ENCODE measurements at regions of chr10 and their contacts with region 1.

Region 1: GRCh38 chr10:102132563-102133372 is at the start of gene PPRC1:
- DNase-seq: peak; percentile 99
- ATAC-seq: peak; percentile 95
- H3K4me3 Mint-ChIP-seq: peak within 1 kb of the TSS; percentile 99
- H3K27ac Mint-ChIP-seq: peak within 1 kb of the TSS; percentile 97
- H3K4me1 Mint-ChIP-seq: peaks cover 36% of the 10 kb centered on the region
- H3K27me3 Mint-ChIP-seq: no peaks in the 10 kb centered on the region
- CTCF ChIP-seq: peak; percentile 97
- total RNA-seq, gene PPRC1: 68.6 to 72.2 TPM

Region 2: GRCh38 chr10:102090772-102091171 is 42.0 kb before region 1 on chr10:
- CTCF ChIA-PET with region 1: no interaction called
- POLR2A ChIA-PET with region 1: no interaction called
- intact Hi-C with region 1: no loop called
- DNase-seq: no peak
- ATAC-seq: no peak
- H3K4me3 Mint-ChIP-seq: no peak overlapping the region
- H3K27ac Mint-ChIP-seq: no peak overlapping the region
- H3K4me1 Mint-ChIP-seq: no peaks in the 10 kb centered on the region
- H3K27me3 Mint-ChIP-seq: no peaks in the 10 kb centered on the region
- CTCF ChIP-seq: no peak

Region 3: GRCh38 chr10:102120142-102120990 is 12.4 kb before region 1 on chr10 and contains the start of gene LDB1:
- CTCF ChIA-PET with region 1: interaction called, 40 read pairs
- POLR2A ChIA-PET with region 1: interaction called, 16 read pairs
- intact Hi-C with region 1: no loop called
- DNase-seq: peak; percentile 72
- ATAC-seq: peak; percentile 35
- H3K4me3 Mint-ChIP-seq: peak within 1 kb of the TSS; percentile 84
- H3K27ac Mint-ChIP-seq: peak within 1 kb of the TSS; percentile 100
- H3K4me1 Mint-ChIP-seq: peaks cover 41% of the 10 kb centered on the region
- H3K27me3 Mint-ChIP-seq: no peaks in the 10 kb centered on the region
- CTCF ChIP-seq: no peak
- total RNA-seq, gene LDB1: 68.5 to 70.9 TPM

Region 4: DNA sequence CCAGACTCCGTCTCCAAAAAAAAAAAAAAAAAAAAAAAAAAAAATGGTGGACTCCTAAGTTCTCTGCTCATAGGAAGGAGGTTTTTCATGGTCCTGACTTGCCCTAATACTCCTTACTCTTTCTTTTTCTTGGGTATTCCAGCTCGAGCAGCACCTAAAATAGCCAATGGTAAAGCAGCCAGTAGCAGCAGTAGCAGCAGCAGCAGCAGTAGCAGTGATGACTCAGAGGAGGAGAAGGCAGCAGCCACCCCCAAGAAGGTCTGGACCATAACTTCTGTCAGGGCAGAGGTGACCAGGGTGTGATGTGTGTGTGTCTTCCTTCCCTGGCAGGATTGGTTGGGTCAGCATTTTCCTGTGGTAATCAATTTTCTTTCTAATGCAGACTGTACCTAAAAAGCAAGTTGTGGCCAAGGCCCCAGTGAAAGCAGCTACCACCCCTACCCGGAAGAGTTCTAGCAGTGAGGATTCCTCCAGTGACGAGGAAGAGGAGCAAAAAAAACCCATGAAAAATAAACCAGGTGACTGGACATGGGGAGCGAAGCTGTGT is 26.4 kb after region 1 on chr10:
- CTCF ChIA-PET with region 1: no interaction called
- POLR2A ChIA-PET with region 1: interaction called, 250 read pairs
- intact Hi-C with region 1: no loop called
- DNase-seq: no peak
- ATAC-seq: no peak
- H3K4me3 Mint-ChIP-seq: no peak overlapping the region
- H3K27ac Mint-ChIP-seq: no peak overlapping the region
- H3K4me1 Mint-ChIP-seq: peaks cover 44% of the 10 kb centered on the region
- H3K27me3 Mint-ChIP-seq: no peaks in the 10 kb centered on the region
- CTCF ChIP-seq: no peak